B cell (primary cell): ENCODE measurements at regions of chr4 and their contacts with region 1.

Region 1: GRCh38 chr4:71184195-71184781 is 154.5 kb upstream of the SLC4A4 start:
- DNase-seq: peak; percentile 73
- ATAC-seq: peak; percentile 69
- H3K4me3 ChIP-seq: no peak overlapping the region
- H3K4me3 Mint-ChIP-seq: no peak overlapping the region
- H3K27ac ChIP-seq: no peak overlapping the region
- H3K27ac Mint-ChIP-seq: no peak overlapping the region
- H3K4me1 ChIP-seq: peaks cover 15 to 19% of the 10 kb centered on the region in 2 donors
- H3K4me1 Mint-ChIP-seq: peaks cover 23% of the 10 kb centered on the region
- H3K27me3 ChIP-seq: peaks cover 0 to 32% (median 26%) of the 10 kb centered on the region in 4 experiments
- H3K27me3 Mint-ChIP-seq: peaks cover 33% of the 10 kb centered on the region
- CTCF ChIP-seq: peak; percentile 86

Region 2: GRCh38 chr4:71095545-71095944 is 88.7 kb before region 1 on chr4:
- CTCF ChIA-PET with region 1: no interaction called
- POLR2A ChIA-PET with region 1: no interaction called
- intact Hi-C with region 1: no loop called
- DNase-seq: no peak
- ATAC-seq: no peak
- H3K4me3 ChIP-seq: no peak overlapping the region
- H3K4me3 Mint-ChIP-seq: no peak overlapping the region
- H3K27ac ChIP-seq: no peak overlapping the region
- H3K27ac Mint-ChIP-seq: no peak overlapping the region
- H3K4me1 ChIP-seq: no peaks in the 10 kb centered on the region
- H3K4me1 Mint-ChIP-seq: peaks cover 3% of the 10 kb centered on the region
- H3K27me3 ChIP-seq: no peaks in the 10 kb centered on the region
- H3K27me3 Mint-ChIP-seq: peaks cover 27% of the 10 kb centered on the region
- CTCF ChIP-seq: no peak

Region 3: DNA sequence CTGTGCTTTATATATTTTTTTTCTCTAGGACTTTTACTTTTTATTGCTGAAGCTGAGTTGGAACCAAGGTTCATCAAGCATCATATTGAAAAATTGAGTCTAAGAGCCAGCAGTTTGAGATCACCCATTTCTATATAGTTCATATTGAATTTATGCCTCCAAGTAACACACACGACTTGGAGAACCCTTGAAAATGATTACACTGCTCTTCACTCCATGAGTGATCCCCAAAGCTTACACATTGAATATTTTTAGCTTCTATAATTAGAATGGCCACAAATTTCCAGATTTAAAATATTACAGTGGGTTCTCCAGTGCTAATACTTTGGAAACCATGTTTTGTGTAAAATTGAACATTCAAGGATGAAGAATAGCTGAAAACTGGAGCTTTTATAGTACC is 10.2 kb after region 1 on chr4:
- CTCF ChIA-PET with region 1: interaction called, 13 read pairs
- POLR2A ChIA-PET with region 1: no interaction called
- intact Hi-C with region 1: no loop called
- DNase-seq: no peak
- ATAC-seq: no peak
- H3K4me3 ChIP-seq: no peak overlapping the region
- H3K4me3 Mint-ChIP-seq: no peak overlapping the region
- H3K27ac ChIP-seq: no peak overlapping the region
- H3K27ac Mint-ChIP-seq: no peak overlapping the region
- H3K4me1 ChIP-seq: no peaks in the 10 kb centered on the region
- H3K4me1 Mint-ChIP-seq: no peaks in the 10 kb centered on the region
- H3K27me3 ChIP-seq: peaks cover 0 to 27% (median 0%) of the 10 kb centered on the region in 4 experiments
- H3K27me3 Mint-ChIP-seq: peaks cover 41% of the 10 kb centered on the region
- CTCF ChIP-seq: no peak

Region 4: GRCh38 chr4:71209161-71209560 is 24.9 kb after region 1 on chr4:
- CTCF ChIA-PET with region 1: no interaction called
- POLR2A ChIA-PET with region 1: no interaction called
- intact Hi-C with region 1: no loop called
- DNase-seq: no peak
- ATAC-seq: no peak
- H3K4me3 ChIP-seq: no peak overlapping the region
- H3K4me3 Mint-ChIP-seq: no peak overlapping the region
- H3K27ac ChIP-seq: no peak overlapping the region
- H3K27ac Mint-ChIP-seq: no peak overlapping the region
- H3K4me1 ChIP-seq: no peaks in the 10 kb centered on the region
- H3K4me1 Mint-ChIP-seq: no peaks in the 10 kb centered on the region
- H3K27me3 ChIP-seq: no peaks in the 10 kb centered on the region
- H3K27me3 Mint-ChIP-seq: peaks cover 2% of the 10 kb centered on the region
- CTCF ChIP-seq: no peak

Region 5: GRCh38 chr4:71338846-71339593 is 154.7 kb after region 1 on chr4 and contains the start of gene SLC4A4:
- CTCF ChIA-PET with region 1: no interaction called
- POLR2A ChIA-PET with region 1: no interaction called
- intact Hi-C with region 1: no loop called
- DNase-seq: no peak
- ATAC-seq: no peak
- H3K4me3 ChIP-seq: no peak within 1 kb of the TSS
- H3K4me3 Mint-ChIP-seq: no peak within 1 kb of the TSS
- H3K27ac ChIP-seq: no peak within 1 kb of the TSS
- H3K27ac Mint-ChIP-seq: no peak within 1 kb of the TSS
- H3K4me1 ChIP-seq: no peaks in the 10 kb centered on the region
- H3K4me1 Mint-ChIP-seq: no peaks in the 10 kb centered on the region
- H3K27me3 ChIP-seq: no peaks in the 10 kb centered on the region
- H3K27me3 Mint-ChIP-seq: peaks cover 9% of the 10 kb centered on the region
- CTCF ChIP-seq: no peak
- total RNA-seq, gene SLC4A4: not detected in 2 replicates